Activated B cell treated with CpG ODN at 0.5 μM for 24 hours (primary cell): ENCODE measurements at regions of chr17 and their contacts with region 1.

Region 1: DNA sequence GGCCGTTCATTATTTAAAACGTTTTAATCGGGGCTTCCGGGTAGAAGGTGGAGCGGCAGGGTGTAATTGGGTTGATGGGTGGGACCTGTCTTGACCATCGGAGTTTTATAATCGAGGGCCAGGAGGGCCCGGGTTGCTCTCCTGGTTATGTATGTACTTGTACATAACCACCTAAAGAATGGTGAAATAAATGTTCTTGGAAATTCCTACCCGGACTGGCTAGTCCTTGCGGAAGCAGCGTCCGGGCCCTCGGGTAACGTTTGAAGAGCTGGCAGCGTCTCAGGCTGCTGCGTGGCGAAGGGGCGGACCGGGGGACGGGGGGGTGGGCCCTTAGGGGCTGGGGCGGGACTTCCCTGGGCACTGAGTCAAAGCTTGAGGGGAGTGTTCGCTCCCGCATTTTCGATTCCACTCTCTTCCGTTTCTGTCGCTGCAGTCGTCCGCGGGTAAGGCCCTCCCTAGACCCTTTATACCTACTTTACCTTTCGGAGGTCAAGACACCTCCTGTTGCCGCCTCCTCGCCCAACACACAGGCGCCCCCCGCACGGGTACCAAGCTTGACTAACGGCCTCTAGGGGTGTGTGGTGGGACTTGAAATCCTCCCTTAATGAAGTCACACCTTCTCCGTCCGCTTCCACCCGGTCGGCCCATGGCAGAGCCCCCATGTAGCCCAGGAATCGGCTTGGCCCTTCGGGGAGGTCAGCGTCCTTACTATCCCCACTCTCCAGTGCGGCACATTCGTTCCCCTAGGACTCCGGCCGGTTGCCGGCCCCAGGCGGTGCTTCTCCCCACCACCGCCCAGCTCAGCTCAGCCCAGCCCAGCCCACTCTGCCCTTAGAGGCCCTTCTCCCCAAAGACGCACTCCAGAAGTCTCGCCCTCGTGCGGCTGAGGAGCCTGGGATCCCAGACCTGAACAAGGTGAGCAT is at the start of gene TMEM106A:
- DNase-seq: peak; percentile 69
- ATAC-seq: peak; percentile 89
- H3K4me3 Mint-ChIP-seq: peak within 1 kb of the TSS; percentile 100
- H3K27ac Mint-ChIP-seq: peak within 1 kb of the TSS; percentile 98
- H3K4me1 Mint-ChIP-seq: peaks cover 45% of the 10 kb centered on the region
- H3K27me3 Mint-ChIP-seq: no peaks in the 10 kb centered on the region
- CTCF ChIP-seq: no peak
- total RNA-seq, gene TMEM106A: 46.0 and 68.0 TPM in 2 replicates

Region 2: GRCh38 chr17:42843358-42843934 is 368.3 kb before region 1 on chr17:
- CTCF ChIA-PET with region 1: interaction called, 3 read pairs
- POLR2A ChIA-PET with region 1: interaction called, 12 read pairs
- intact Hi-C with region 1: no loop called
- DNase-seq: no peak
- ATAC-seq: peak; percentile 45
- H3K4me3 Mint-ChIP-seq: no peak overlapping the region
- H3K27ac Mint-ChIP-seq: no peak overlapping the region
- H3K4me1 Mint-ChIP-seq: peaks cover 17% of the 10 kb centered on the region
- H3K27me3 Mint-ChIP-seq: no peaks in the 10 kb centered on the region
- CTCF ChIP-seq: no peak

Region 3: DNA sequence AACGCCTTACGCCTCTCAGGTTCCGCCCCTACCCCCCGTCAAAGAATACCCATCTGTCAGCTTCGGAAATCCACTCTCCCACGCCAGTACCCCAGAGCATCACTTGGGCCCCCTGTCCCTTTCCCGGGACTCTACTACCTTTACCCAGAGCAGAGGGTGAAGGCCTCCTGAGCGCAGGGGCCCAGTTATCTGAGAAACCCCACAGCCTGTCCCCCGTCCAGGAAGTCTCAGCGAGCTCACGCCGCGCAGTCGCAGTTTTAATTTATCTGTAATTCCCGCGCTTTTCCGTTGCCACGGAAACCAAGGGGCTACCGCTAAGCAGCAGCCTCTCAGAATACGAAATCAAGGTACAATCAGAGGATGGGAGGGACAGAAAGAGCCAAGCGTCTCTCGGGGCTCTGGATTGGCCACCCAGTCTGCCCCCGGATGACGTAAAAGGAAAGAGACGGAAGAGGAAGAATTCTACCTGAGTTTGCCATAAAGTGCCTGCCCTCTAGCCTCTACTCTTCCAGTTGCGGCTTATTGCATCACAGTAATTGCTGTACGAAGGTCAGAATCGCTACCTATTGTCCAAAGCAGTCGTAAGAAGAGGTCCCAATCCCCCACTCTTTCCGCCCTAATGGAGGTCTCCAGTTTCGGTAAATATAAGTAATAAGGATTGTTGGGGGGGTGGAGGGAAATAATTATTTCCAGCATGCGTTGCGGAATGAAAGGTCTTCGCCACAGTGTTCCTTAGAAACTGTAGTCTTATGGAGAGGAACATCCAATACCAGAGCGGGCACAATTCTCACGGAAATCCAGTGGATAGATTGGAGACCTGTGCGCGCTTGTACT is 86.4 kb before region 1 on chr17 and contains the start of gene BRCA1:
- CTCF ChIA-PET with region 1: no interaction called
- POLR2A ChIA-PET with region 1: interaction called, 8 read pairs
- intact Hi-C with region 1: loop called (anchors 1 kb)
- DNase-seq: peak; percentile 77
- ATAC-seq: peak; percentile 98
- H3K4me3 Mint-ChIP-seq: peak within 1 kb of the TSS; percentile 98
- H3K27ac Mint-ChIP-seq: peak within 1 kb of the TSS; percentile 90
- H3K4me1 Mint-ChIP-seq: peaks cover 44% of the 10 kb centered on the region
- H3K27me3 Mint-ChIP-seq: no peaks in the 10 kb centered on the region
- CTCF ChIP-seq: no peak
- total RNA-seq, gene BRCA1: 11.9 and 13.3 TPM in 2 replicates

Region 4: DNA sequence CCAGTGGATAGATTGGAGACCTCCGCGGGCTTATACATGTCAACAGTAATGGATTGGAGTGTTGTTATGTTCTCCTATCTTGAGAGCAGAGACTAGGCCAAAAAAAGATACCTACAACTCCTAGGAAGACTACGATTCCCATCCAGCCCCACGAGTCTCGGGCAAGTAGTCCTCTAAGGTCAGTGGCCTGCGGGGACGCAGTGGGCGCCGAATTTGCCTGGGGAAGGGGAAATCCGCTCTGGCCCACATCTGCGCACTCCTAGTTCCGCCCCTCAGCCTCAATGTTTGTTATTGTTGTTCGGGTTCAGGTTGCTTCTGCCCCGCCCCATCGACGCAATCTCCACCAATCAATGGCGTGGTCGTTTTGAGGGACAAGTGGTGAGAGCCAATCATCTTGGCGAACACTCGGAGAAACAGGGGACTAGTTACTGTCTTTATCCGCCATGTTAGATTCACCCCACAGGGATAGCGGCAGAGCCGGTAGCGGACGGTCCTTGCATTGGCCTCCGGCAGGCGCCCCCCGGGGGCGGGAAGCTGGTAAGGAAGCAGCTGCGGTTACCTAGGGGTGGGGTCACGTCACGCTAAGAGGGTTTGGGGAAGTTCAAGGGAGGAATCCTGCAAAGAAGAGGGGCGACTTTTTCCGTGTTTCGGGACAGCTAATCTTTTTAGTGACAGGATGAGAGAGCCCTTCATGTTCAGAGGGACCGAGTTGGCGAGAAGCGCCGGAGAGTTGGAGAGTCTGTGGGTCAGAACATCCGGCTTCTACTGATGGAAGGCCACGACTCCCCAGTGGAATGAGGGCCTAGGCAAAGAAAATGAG is 40.8 kb before region 1 on chr17 and contains the start of gene NBR1:
- CTCF ChIA-PET with region 1: interaction called, 7 read pairs
- POLR2A ChIA-PET with region 1: interaction called, 54 read pairs
- intact Hi-C with region 1: loop called (anchors 1 kb)
- DNase-seq: peak; percentile 86
- ATAC-seq: peak; percentile 74
- H3K4me3 Mint-ChIP-seq: no peak within 1 kb of the TSS
- H3K27ac Mint-ChIP-seq: no peak within 1 kb of the TSS
- H3K4me1 Mint-ChIP-seq: peaks cover 13% of the 10 kb centered on the region
- H3K27me3 Mint-ChIP-seq: no peaks in the 10 kb centered on the region
- CTCF ChIP-seq: no peak
- total RNA-seq, gene NBR1: 42.2 and 44.8 TPM in 2 replicates

Region 5: DNA sequence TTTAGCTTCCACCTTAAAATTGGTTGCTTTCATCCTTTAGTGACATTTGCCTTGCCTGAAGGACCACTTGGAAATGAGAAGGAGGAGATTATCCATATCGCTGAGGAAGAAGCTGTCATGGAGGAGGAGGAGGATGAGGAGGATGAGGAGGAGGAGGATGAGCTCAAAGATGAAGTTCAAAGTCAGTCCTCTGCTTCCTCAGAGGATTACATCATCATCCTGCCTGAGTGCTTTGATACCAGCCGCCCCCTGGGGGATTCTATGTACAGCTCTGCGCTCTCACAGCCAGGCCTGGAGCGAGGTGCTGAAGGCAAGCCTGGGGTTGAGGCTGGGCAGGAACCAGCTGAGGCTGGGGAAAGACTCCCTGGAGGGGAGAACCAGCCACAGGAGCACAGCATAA is 11.6 kb before region 1 on chr17:
- CTCF ChIA-PET with region 1: interaction called, 4 read pairs
- POLR2A ChIA-PET with region 1: interaction called, 12 read pairs
- intact Hi-C with region 1: no loop called
- DNase-seq: no peak
- ATAC-seq: peak; percentile 74
- H3K4me3 Mint-ChIP-seq: no peak overlapping the region
- H3K27ac Mint-ChIP-seq: no peak overlapping the region
- H3K4me1 Mint-ChIP-seq: no peaks in the 10 kb centered on the region
- H3K27me3 Mint-ChIP-seq: no peaks in the 10 kb centered on the region
- CTCF ChIP-seq: no peak

Region 6: DNA sequence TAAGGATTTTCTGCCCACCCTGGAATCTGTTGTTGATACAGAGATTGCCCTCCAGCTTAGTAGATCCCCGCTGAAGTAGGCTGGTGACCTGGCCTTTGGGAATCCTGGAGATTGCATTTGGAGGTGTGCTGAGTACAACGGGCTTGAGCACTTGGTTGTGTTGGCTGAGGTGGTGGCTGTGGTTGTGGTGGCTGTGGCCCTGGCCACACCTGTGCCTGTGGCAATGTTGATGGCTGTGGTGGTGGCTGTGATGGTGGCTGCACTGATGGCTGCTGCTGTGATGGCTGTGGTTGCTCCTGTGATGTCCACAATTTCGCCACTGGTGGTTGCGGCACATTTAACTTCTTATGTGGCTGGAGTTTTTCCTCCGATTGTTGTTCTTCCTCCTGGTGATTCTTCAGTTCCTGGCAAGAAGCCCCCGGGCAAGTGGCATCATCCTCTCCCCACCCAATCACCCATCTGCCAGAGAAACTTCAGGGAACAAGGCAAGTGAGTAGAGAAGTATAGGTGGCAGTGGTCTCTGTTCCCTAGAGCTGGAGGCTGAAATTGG is 12.5 kb after region 1 on chr17:
- CTCF ChIA-PET with region 1: no interaction called
- POLR2A ChIA-PET with region 1: interaction called, 13 read pairs
- intact Hi-C with region 1: no loop called
- DNase-seq: no peak
- ATAC-seq: no peak
- H3K4me3 Mint-ChIP-seq: no peak overlapping the region
- H3K27ac Mint-ChIP-seq: peak overlapping the region; percentile 37
- H3K4me1 Mint-ChIP-seq: peaks cover 7% of the 10 kb centered on the region
- H3K27me3 Mint-ChIP-seq: no peaks in the 10 kb centered on the region
- CTCF ChIP-seq: no peak

Region 7: GRCh38 chr17:43360739-43361505 is 149.2 kb after region 1 on chr17:
- CTCF ChIA-PET with region 1: no interaction called
- POLR2A ChIA-PET with region 1: interaction called, 34 read pairs
- intact Hi-C with region 1: no loop called
- DNase-seq: peak; percentile 65
- ATAC-seq: peak; percentile 76
- H3K4me3 Mint-ChIP-seq: peak overlapping the region; percentile 93
- H3K27ac Mint-ChIP-seq: peak overlapping the region; percentile 100
- H3K4me1 Mint-ChIP-seq: peaks cover 15% of the 10 kb centered on the region
- H3K27me3 Mint-ChIP-seq: peaks cover 2% of the 10 kb centered on the region
- CTCF ChIP-seq: no peak